Ascending aorta (tissue), 2 donors: ENCODE measurements at regions of chr19 and their contacts with region 1.

Region 1: DNA sequence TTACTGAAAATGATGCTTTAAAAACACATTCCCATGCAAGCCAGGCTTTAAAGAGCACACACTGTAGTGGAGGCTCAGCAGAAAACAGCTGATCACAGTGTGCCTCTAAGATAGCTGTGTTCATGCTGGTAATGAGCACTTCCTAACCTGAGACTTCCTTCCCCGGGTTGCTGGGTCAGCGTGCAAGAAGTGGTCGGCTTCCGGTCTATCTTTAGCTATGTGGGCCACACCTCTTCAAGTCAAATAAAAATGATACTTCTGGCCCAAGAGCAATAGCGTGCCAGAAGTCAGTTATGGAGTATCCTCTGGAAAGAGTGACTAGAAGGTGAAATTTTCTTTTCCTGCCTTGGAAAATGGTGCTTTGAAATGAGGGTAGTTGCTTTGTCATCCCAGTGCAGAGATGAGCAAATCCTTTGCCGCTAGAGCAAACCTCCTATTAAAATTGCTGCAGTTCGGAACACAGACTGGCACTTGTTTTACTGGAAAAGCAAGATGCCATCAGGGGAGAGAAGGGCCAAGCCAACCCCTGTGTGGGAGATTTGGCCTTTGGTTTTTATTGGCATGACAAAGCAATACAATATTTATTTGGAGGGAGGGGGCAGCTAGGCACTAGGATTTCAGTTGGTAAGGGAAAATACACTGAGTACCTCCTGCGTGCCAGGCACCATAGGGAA is 64.2 kb downstream of the ARHGAP35 start:
- DNase-seq: peak in 1 of 2 donors; percentile 63
- H3K4me3 ChIP-seq: no peak overlapping the region
- H3K27ac ChIP-seq: peak overlapping the region; percentile 42 to 60
- H3K4me1 ChIP-seq: peaks cover 19 to 49% of the 10 kb centered on the region in 2 donors
- H3K27me3 ChIP-seq: no peaks in the 10 kb centered on the region
- CTCF ChIP-seq: no peak

Region 2: GRCh38 chr19:46984077-46985010 is 59.3 kb after region 1 on chr19:
- intact Hi-C with region 1: loop called (anchors 5 kb)
- DNase-seq: peak in 1 of 2 donors; percentile 79
- H3K4me3 ChIP-seq: peak overlapping the region in 1 of 2 donors; percentile 18
- H3K27ac ChIP-seq: peak overlapping the region; percentile 74 to 77
- H3K4me1 ChIP-seq: peaks cover 13 to 56% of the 10 kb centered on the region in 2 donors
- H3K27me3 ChIP-seq: no peaks in the 10 kb centered on the region
- CTCF ChIP-seq: no peak